ENCODE measurements at regions of chr3 and their contacts with region 1.

Region 1: DNA sequence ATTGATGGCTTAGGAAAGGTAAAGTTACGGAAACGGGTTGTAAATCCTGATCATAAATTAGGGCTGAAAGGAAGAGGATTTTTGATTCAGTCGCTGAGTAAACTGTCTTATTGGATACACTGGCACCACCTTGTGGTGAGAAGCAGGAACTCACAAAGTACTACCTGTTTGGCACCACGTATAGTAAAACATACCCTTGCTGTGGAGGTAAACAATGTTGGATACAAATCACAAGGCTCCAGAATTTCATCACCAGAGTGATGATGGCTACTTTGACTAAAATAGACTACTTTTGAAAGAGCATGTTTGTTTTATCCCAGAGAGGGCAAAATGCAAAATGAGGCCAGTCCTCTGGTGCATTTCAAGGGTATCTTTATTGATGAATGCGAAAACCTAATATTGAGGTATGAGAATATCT is 216.9 kb downstream of the IGSF11 start:
- DNase-seq: peak; percentile 54 to 60
- H3K4me3 ChIP-seq: no peak overlapping the region
- H3K4me3 Mint-ChIP-seq: no peak overlapping the region
- H3K27ac Mint-ChIP-seq: no peak overlapping the region
- H3K4me1 ChIP-seq: no peaks in the 10 kb centered on the region
- H3K4me1 Mint-ChIP-seq: no peaks in the 10 kb centered on the region
- H3K27me3 ChIP-seq: no peaks in the 10 kb centered on the region
- H3K27me3 Mint-ChIP-seq: peaks cover 3% of the 10 kb centered on the region
- CTCF ChIP-seq: peak; percentile 81 to 86

Region 2: GRCh38 chr3:118607915-118608820 is 209.6 kb before region 1 on chr3:
- CTCF ChIA-PET with region 1: no interaction called
- POLR2A ChIA-PET with region 1: no interaction called
- intact Hi-C with region 1: no loop called
- DNase-seq: no peak
- H3K4me3 ChIP-seq: no peak overlapping the region
- H3K4me3 Mint-ChIP-seq: no peak overlapping the region
- H3K27ac Mint-ChIP-seq: no peak overlapping the region
- H3K4me1 ChIP-seq: no peaks in the 10 kb centered on the region
- H3K4me1 Mint-ChIP-seq: peaks cover 2% of the 10 kb centered on the region
- H3K27me3 ChIP-seq: no peaks in the 10 kb centered on the region
- H3K27me3 Mint-ChIP-seq: no peaks in the 10 kb centered on the region
- CTCF ChIP-seq: no peak

Region 3: GRCh38 chr3:118636841-118637240 is 180.9 kb before region 1 on chr3:
- CTCF ChIA-PET with region 1: interaction called, 3 read pairs
- POLR2A ChIA-PET with region 1: no interaction called
- intact Hi-C with region 1: loop called (anchors 1 kb)
- DNase-seq: peak; percentile 38 to 56
- H3K4me3 ChIP-seq: no peak overlapping the region
- H3K4me3 Mint-ChIP-seq: no peak overlapping the region
- H3K27ac Mint-ChIP-seq: no peak overlapping the region
- H3K4me1 ChIP-seq: no peaks in the 10 kb centered on the region
- H3K4me1 Mint-ChIP-seq: no peaks in the 10 kb centered on the region
- H3K27me3 ChIP-seq: no peaks in the 10 kb centered on the region
- H3K27me3 Mint-ChIP-seq: no peaks in the 10 kb centered on the region
- CTCF ChIP-seq: peak; percentile 51 to 57

Region 4: GRCh38 chr3:118688396-118688884 is 129.3 kb before region 1 on chr3:
- CTCF ChIA-PET with region 1: no interaction called
- POLR2A ChIA-PET with region 1: no interaction called
- intact Hi-C with region 1: loop called (anchors 5 kb)
- DNase-seq: no peak
- H3K4me3 ChIP-seq: no peak overlapping the region
- H3K4me3 Mint-ChIP-seq: no peak overlapping the region
- H3K27ac Mint-ChIP-seq: no peak overlapping the region
- H3K4me1 ChIP-seq: no peaks in the 10 kb centered on the region
- H3K4me1 Mint-ChIP-seq: no peaks in the 10 kb centered on the region
- H3K27me3 ChIP-seq: no peaks in the 10 kb centered on the region
- H3K27me3 Mint-ChIP-seq: no peaks in the 10 kb centered on the region
- CTCF ChIP-seq: no peak

Region 5: DNA sequence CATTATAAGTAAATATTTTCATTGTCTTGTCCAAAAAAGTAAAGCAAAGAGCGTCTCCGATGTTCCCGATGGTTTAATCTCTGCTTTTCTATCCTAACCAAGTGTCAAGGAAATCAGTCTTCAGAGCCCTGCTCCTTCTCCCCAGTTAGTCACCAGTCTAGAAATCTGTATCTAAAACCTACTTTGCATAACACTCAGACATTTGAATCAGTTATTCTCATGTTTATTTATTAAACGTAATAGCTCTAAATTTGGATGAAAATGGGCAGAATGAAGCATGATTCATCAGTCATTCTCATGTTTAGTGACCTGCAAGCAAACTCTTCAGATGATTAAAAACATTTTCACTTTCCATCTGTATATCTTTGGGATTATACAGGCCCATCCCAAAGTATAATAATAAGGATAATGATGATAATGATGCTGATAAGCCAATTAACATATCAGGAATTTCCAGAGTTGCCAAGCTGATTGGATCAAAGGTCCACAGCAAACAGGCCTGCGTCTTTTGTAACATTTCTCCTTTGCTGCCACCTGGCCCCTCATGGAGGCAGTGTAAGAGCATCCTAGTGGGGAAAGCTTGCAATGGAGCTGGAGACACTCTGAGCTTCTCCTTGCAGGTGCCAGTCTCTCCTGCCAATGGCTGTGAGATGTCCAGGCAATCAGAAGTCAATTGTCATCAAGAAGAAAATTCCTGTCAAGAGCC is 57.0 kb before region 1 on chr3:
- CTCF ChIA-PET with region 1: interaction called, 8 read pairs
- POLR2A ChIA-PET with region 1: no interaction called
- intact Hi-C with region 1: loop called (anchors 1 kb)
- DNase-seq: peak; percentile 31 to 35
- H3K4me3 ChIP-seq: no peak overlapping the region
- H3K4me3 Mint-ChIP-seq: no peak overlapping the region
- H3K27ac Mint-ChIP-seq: no peak overlapping the region
- H3K4me1 ChIP-seq: no peaks in the 10 kb centered on the region
- H3K4me1 Mint-ChIP-seq: peaks cover 6% of the 10 kb centered on the region
- H3K27me3 ChIP-seq: no peaks in the 10 kb centered on the region
- H3K27me3 Mint-ChIP-seq: no peaks in the 10 kb centered on the region
- CTCF ChIP-seq: peak; percentile 26 to 55